Heart left ventricle (tissue), 16 donors: ENCODE measurements at regions of chr17 and their contacts with region 1.

Region 1: GRCh38 chr17:77602062-77602746 is 356.3 kb upstream of the TNRC6C start:
- DNase-seq: peak in 4 of 5 donors; percentile 75 to 90 (median 83)
- ATAC-seq: peak; percentile 94 to 96 (median 95)
- H3K4me3 ChIP-seq: peak overlapping the region in 1 of 12 donors; percentile 1
- H3K27ac ChIP-seq: peak overlapping the region; percentile 81 to 98 (median 92)
- H3K4me1 ChIP-seq: peaks cover 0 to 37% (median 28%) of the 10 kb centered on the region in 12 donors
- H3K27me3 ChIP-seq: no peaks in the 10 kb centered on the region
- CTCF ChIP-seq: no peak
- POLR2A ChIP-seq: no peak

Region 2: GRCh38 chr17:77549726-77550366 is 52.4 kb before region 1 on chr17:
- intact Hi-C with region 1: loop called in 1 of 10 experiments (anchors 5 kb)
- DNase-seq: no peak
- ATAC-seq: no peak
- H3K4me3 ChIP-seq: no peak overlapping the region
- H3K27ac ChIP-seq: no peak overlapping the region
- H3K4me1 ChIP-seq: peaks cover 0 to 3% (median 0%) of the 10 kb centered on the region in 12 donors
- H3K27me3 ChIP-seq: no peaks in the 10 kb centered on the region
- CTCF ChIP-seq: no peak
- POLR2A ChIP-seq: no peak

Region 3: DNA sequence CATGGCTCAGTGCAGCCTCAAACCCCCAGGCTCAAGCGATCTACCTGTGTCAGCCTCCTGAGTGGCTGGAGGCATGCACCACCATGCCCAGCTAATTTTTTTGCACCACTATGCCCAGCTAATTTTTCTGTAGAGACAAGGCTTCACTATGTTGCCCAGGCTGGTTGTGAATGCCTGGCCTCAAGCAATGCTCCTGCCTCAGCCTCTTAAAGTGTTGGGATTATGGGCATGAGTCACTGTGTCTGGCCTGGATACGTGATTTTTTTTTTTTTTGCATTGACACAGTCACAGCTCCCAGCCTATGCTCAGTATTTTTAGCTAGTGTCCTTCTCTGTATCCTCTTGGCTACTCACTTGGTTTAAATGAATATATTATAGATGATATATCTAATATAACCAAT is 20.7 kb before region 1 on chr17:
- intact Hi-C with region 1: no loop called
- DNase-seq: no peak
- ATAC-seq: peak in 3 of 4 donors; percentile 73 to 93 (median 92)
- H3K4me3 ChIP-seq: no peak overlapping the region
- H3K27ac ChIP-seq: peak overlapping the region in 1 of 12 donors; percentile 25
- H3K4me1 ChIP-seq: peaks cover 0 to 14% (median 0%) of the 10 kb centered on the region in 12 donors
- H3K27me3 ChIP-seq: no peaks in the 10 kb centered on the region
- CTCF ChIP-seq: no peak
- POLR2A ChIP-seq: no peak

Region 4: GRCh38 chr17:77681861-77682260 is 79.7 kb after region 1 on chr17:
- intact Hi-C with region 1: loop called in 3 of 10 experiments (anchors 2 to 10 kb)
- DNase-seq: peak; percentile 46 to 90 (median 78)
- ATAC-seq: peak; percentile 73 to 81 (median 77)
- H3K4me3 ChIP-seq: no peak overlapping the region
- H3K27ac ChIP-seq: peak overlapping the region in 7 of 12 donors; percentile 0 to 55 (median 29)
- H3K4me1 ChIP-seq: peaks cover 0 to 36% (median 5%) of the 10 kb centered on the region in 12 donors
- H3K27me3 ChIP-seq: no peaks in the 10 kb centered on the region
- CTCF ChIP-seq: no peak
- POLR2A ChIP-seq: no peak